ENCODE measurements at regions of chr2 and their contacts with region 1.

Region 1: DNA sequence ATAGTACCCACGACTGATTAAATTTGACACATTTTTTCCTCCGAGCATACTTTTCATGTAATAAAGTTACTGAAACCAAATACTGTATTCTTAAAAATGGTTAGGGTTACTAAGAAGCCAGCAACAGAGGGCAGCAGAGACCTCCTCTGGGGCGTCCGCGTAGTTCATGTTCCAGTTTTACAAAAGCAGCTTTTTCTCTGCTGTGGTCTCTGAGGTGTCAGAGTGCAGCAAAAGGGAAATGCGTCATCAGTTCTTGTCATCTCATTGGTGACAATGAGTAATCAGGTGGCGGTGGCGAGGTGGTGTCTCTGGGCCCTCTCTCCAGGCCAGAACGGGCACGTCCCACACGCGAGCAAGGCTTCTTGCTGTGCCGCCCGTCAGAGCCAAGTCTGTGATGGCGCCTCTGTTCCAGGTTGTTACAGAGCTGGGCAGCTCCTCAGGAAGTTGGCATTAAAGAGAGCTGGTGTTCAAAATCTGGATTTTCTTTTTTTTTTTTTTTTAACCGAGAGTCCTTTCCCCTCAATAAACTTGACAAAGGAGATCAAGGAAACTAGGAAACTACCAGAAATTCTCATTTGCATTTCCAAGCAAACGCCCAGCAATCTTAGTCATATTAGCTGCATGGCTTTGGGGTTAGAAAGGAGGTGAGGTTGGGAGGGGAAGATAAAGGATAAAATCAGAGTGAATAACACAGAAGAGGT is 98.6 kb upstream of the BZW1 start:
- DNase-seq: peak; percentile 95
- H3K4me3 ChIP-seq: peak overlapping the region in 5 of 8 donors; percentile 20 to 52 (median 21)
- H3K27ac ChIP-seq: peak overlapping the region; percentile 58 to 88 (median 80)
- H3K4me1 ChIP-seq: peaks cover 0 to 16% (median 7%) of the 10 kb centered on the region in 6 donors
- H3K27me3 ChIP-seq: no peaks in the 10 kb centered on the region
- CTCF ChIP-seq: peak; percentile 51 to 83 (median 76)
- POLR2A ChIP-seq: peak in 2 of 3 donors; percentile 69 to 86

Region 2: GRCh38 chr2:200811336-200812121 is 98.4 kb after region 1 on chr2 and contains the start of gene BZW1:
- intact Hi-C with region 1: loop called (anchors 5 kb)
- DNase-seq: peak; percentile 99
- H3K4me3 ChIP-seq: peak within 1 kb of the TSS; percentile 78 to 98 (median 95)
- H3K27ac ChIP-seq: peak within 1 kb of the TSS; percentile 99 to 100 (median 99)
- H3K4me1 ChIP-seq: peaks cover 26 to 59% (median 45%) of the 10 kb centered on the region in 6 donors
- H3K27me3 ChIP-seq: no peaks in the 10 kb centered on the region
- CTCF ChIP-seq: peak in 1 of 11 experiments; percentile 10
- POLR2A ChIP-seq: peak; percentile 78 to 92 (median 89)
- total RNA-seq, gene BZW1: 94.4 to 151 (median 138) TPM